Activated naive CD4-positive, alpha-beta T cell treated with anti-CD3 and anti-CD28 coated beads for 36 hours (primary cell): ENCODE measurements at regions of chr4 and their contacts with region 1.

Region 1: GRCh38 chr4:138680989-138681604 is 334.5 kb upstream of the NOCT start:
- DNase-seq: peak; percentile 86
- H3K4me3 Mint-ChIP-seq: no peak overlapping the region
- H3K27ac Mint-ChIP-seq: no peak overlapping the region
- H3K4me1 Mint-ChIP-seq: no peaks in the 10 kb centered on the region
- H3K27me3 Mint-ChIP-seq: peaks cover 22% of the 10 kb centered on the region

Region 2: DNA sequence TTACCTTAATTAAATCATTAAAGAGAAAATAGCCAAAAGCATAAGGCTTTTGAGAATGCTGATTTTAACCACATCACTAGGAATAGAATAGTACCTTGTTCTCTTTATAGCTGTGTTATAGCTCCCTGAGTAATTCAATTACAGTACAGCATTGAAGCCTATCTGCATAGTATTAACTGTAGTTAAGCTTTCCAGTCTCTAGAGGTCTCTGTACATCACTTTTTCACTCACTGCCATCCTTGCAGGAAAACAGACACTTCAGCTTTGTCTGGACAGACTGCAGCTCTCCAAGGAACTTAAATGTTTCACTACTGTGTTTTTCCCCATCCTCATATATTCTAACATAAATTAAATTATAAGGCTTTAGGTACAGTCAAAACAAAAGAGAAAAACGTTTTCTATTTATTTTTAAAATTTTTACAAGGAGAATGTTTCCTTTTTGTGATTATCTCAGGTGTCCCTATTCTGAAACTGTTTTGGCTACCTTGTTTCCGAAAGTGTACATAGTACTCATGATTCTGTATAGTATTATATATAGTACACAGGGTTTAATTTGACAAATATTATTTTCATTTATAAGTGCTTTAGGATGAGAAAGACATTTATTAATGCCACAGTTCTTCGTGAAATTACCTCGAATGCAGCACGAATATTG is 1556.7 kb before region 1 on chr4:
- CTCF ChIA-PET with region 1: no interaction called
- intact Hi-C with region 1: loop called (anchors 2 kb)
- DNase-seq: no peak
- H3K4me3 Mint-ChIP-seq: no peak overlapping the region
- H3K27ac Mint-ChIP-seq: no peak overlapping the region
- H3K4me1 Mint-ChIP-seq: no peaks in the 10 kb centered on the region
- H3K27me3 Mint-ChIP-seq: no peaks in the 10 kb centered on the region

Region 3: GRCh38 chr4:137819964-137820383 is 861.1 kb before region 1 on chr4:
- CTCF ChIA-PET with region 1: no interaction called
- intact Hi-C with region 1: loop called (anchors 1 kb)
- DNase-seq: no peak
- H3K4me3 Mint-ChIP-seq: no peak overlapping the region
- H3K27ac Mint-ChIP-seq: no peak overlapping the region
- H3K4me1 Mint-ChIP-seq: no peaks in the 10 kb centered on the region
- H3K27me3 Mint-ChIP-seq: no peaks in the 10 kb centered on the region

Region 4: DNA sequence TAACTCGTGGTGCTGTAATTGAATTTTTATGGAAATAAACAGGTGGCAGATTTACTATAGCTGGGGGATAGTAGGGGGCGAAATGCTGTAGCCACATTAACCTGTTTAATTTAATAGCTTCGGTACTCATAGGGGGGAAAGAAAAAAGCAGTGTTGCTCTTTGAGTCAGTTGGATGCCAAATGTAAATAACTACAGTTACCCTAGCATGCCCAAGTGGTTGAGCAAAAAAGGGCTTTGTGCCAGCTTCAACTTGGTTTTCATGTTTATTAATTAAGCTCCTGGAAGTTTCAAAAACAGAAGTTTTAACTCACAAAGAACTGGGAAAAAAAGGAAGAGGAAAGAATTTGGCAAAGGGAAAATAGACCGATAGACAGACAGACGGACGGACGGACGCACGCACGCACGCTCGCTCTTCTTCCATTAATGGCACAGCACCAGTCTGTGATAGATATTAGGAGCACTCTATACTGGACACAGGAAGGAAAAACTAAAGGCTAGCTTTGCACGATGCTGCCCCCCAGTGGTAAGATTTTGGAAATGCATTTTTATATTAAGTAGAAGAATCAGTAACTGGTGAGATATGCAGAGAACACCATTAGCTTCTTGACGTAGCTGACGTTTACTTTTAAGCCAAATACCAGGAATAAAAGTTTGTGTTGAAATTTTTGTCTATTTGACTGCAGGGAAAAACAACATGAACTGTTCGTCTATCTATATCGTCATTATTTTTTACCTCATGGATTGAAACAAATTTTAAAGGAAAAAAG is 590.8 kb before region 1 on chr4:
- CTCF ChIA-PET with region 1: interaction called, 6 read pairs
- intact Hi-C with region 1: loop called (anchors 1 kb)
- DNase-seq: peak; percentile 55
- H3K4me3 Mint-ChIP-seq: no peak overlapping the region
- H3K27ac Mint-ChIP-seq: no peak overlapping the region
- H3K4me1 Mint-ChIP-seq: no peaks in the 10 kb centered on the region
- H3K27me3 Mint-ChIP-seq: no peaks in the 10 kb centered on the region

Region 5: DNA sequence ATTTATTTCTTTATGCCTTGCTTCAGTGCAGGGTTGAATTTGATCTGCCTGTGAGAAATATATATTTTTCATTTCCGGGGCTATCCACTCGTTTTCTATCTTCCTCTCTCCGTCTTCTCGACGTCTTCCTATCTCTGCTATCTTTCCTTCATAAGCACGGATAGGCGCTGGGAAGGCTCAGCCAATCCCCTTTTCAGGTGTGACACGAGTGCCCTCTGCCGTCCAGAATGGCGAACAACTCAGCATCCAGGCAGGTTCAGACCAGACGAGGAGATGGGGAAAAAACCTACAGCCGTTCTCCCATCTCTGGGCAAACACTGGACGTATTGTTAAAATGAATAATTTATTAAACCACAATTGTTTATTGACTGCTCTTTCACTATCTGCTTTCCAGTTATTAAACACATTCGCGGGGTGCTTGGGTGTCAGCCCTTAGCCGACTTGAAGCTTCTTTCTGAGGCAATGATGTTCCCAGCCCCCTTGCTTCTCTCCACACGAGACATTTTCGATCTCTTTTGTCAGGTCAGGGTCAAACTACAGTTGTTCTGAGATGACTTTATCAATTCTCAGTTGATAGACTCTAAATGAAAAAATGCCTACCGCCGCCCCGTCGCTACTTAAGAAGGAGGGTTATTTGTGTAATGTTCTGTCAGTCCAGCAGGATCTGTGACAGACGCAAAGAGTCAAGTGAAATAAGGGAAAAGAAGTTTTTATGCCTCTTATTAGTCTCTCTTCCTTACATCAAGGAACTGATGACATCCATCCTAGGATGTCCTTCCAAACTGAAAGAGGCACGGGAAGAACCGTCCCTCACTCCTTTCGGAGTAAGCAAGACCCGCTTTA is 238.2 kb after region 1 on chr4:
- CTCF ChIA-PET with region 1: no interaction called
- intact Hi-C with region 1: loop called (anchors 10 kb)
- DNase-seq: peak; percentile 36
- H3K4me3 Mint-ChIP-seq: no peak overlapping the region
- H3K27ac Mint-ChIP-seq: no peak overlapping the region
- H3K4me1 Mint-ChIP-seq: no peaks in the 10 kb centered on the region
- H3K27me3 Mint-ChIP-seq: peaks cover 10% of the 10 kb centered on the region

Region 6: DNA sequence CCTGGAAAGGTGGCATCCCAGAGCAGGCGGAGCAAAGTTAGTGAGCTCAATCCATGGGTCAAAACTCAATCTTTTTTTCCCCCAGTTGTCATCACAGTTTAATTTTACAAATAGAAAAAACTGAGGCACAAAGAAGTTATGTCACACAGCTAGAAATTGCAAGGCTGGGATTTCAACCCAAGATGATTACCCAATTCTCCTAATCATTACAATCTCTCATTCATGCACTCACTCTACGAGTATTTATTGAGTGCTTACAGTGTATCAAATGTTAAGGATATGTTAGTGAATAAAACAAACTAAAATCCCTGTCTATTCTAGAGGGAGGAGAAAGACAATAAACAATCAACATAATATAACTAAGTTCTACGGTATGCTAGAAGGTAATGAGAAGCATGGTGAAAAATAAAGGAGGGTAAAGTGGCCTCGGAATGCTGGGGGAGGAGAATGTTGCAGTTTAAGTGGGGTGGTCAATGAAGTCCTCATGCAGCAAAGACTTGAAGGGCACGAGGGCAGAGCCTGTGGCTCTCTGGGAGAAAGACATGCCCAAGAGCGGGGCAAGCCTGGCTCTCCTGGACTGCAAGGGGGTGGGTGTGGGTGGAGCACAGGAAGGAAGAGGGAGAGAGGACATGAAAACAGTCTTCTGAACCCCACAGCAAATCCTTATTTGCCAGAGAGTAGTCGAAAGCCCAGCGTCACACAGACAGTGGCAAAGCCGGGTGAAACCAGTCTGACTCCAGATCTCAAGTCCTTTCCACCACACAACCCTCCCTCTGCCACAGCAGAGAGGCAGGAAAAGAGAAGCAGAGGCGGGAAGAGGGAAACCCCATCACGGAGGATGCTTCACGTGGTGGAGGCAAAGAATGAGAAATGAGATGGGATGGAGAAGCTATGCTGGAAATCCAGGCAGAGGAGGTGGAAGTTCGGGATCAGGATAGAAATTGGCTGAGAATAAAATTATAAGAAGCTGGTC is 821.1 kb after region 1 on chr4:
- CTCF ChIA-PET with region 1: no interaction called
- intact Hi-C with region 1: no loop called
- DNase-seq: no peak
- H3K4me3 Mint-ChIP-seq: no peak overlapping the region
- H3K27ac Mint-ChIP-seq: no peak overlapping the region
- H3K4me1 Mint-ChIP-seq: no peaks in the 10 kb centered on the region
- H3K27me3 Mint-ChIP-seq: peaks cover 2% of the 10 kb centered on the region